CD8-positive, alpha-beta T cell (primary cell): ENCODE measurements at regions of chr3 and their contacts with region 1.

Region 1: GRCh38 chr3:45665101-45665572 is 24.1 kb upstream of the SACM1L start:
- DNase-seq: peak; percentile 30 to 87 (median 64)
- ATAC-seq: peak; percentile 43
- H3K4me3 ChIP-seq: peak overlapping the region; percentile 60 to 63
- H3K4me3 Mint-ChIP-seq: peak overlapping the region; percentile 90
- H3K27ac ChIP-seq: peak overlapping the region; percentile 60 to 61
- H3K27ac Mint-ChIP-seq: peak overlapping the region; percentile 92
- H3K4me1 ChIP-seq: peaks cover 19% of the 10 kb centered on the region
- H3K4me1 Mint-ChIP-seq: peaks cover 25% of the 10 kb centered on the region
- H3K27me3 ChIP-seq: no peaks in the 10 kb centered on the region
- H3K27me3 Mint-ChIP-seq: no peaks in the 10 kb centered on the region
- CTCF ChIP-seq: peak; percentile 56

Region 2: GRCh38 chr3:45571971-45572370 is 93.2 kb before region 1 on chr3:
- CTCF ChIA-PET with region 1: no interaction called
- POLR2A ChIA-PET with region 1: no interaction called
- intact Hi-C with region 1: no loop called
- DNase-seq: no peak
- ATAC-seq: no peak
- H3K4me3 ChIP-seq: no peak overlapping the region
- H3K4me3 Mint-ChIP-seq: no peak overlapping the region
- H3K27ac ChIP-seq: no peak overlapping the region
- H3K27ac Mint-ChIP-seq: no peak overlapping the region
- H3K4me1 ChIP-seq: peaks cover 10% of the 10 kb centered on the region
- H3K4me1 Mint-ChIP-seq: peaks cover 15% of the 10 kb centered on the region
- H3K27me3 ChIP-seq: no peaks in the 10 kb centered on the region
- H3K27me3 Mint-ChIP-seq: no peaks in the 10 kb centered on the region
- CTCF ChIP-seq: no peak

Region 3: GRCh38 chr3:45677033-45677433 is 11.9 kb after region 1 on chr3:
- CTCF ChIA-PET with region 1: interaction called, 42 read pairs
- POLR2A ChIA-PET with region 1: interaction called, 11 read pairs
- intact Hi-C with region 1: loop called in 1 of 2 experiments (anchors 1 kb)
- DNase-seq: peak; percentile 34 to 86 (median 70)
- ATAC-seq: peak; percentile 100
- H3K4me3 ChIP-seq: peak overlapping the region; percentile 29 to 45
- H3K4me3 Mint-ChIP-seq: peak overlapping the region; percentile 77
- H3K27ac ChIP-seq: peak overlapping the region; percentile 53 to 83
- H3K27ac Mint-ChIP-seq: peak overlapping the region; percentile 96
- H3K4me1 ChIP-seq: peaks cover 22% of the 10 kb centered on the region
- H3K4me1 Mint-ChIP-seq: peaks cover 28% of the 10 kb centered on the region
- H3K27me3 ChIP-seq: no peaks in the 10 kb centered on the region
- H3K27me3 Mint-ChIP-seq: no peaks in the 10 kb centered on the region
- CTCF ChIP-seq: no peak